ENCODE measurements at regions of chr3 and their contacts with region 1.

Region 1: GRCh38 chr3:16338999-16339398 is 74.0 kb downstream of the OXNAD1 start:
- DNase-seq: peak in 4 of 14 experiments; percentile 32 to 70 (median 62)
- ATAC-seq: peak; percentile 65
- H3K4me3 ChIP-seq: no peak overlapping the region
- H3K4me3 Mint-ChIP-seq: peak overlapping the region; percentile 70
- H3K27ac ChIP-seq: peak overlapping the region; percentile 47 to 66
- H3K27ac Mint-ChIP-seq: peak overlapping the region; percentile 82
- H3K4me1 ChIP-seq: peaks cover 43% of the 10 kb centered on the region
- H3K4me1 Mint-ChIP-seq: peaks cover 81% of the 10 kb centered on the region
- H3K27me3 ChIP-seq: no peaks in the 10 kb centered on the region
- H3K27me3 Mint-ChIP-seq: no peaks in the 10 kb centered on the region
- CTCF ChIP-seq: no peak

Region 2: GRCh38 chr3:16309558-16309957 is 29.4 kb before region 1 on chr3:
- CTCF ChIA-PET with region 1: no interaction called
- POLR2A ChIA-PET with region 1: interaction called, 13 read pairs
- intact Hi-C with region 1: no loop called
- DNase-seq: peak in 9 of 14 experiments; percentile 32 to 88 (median 52)
- ATAC-seq: peak; percentile 69
- H3K4me3 ChIP-seq: no peak overlapping the region
- H3K4me3 Mint-ChIP-seq: peak overlapping the region; percentile 83
- H3K27ac ChIP-seq: peak overlapping the region; percentile 63 to 67
- H3K27ac Mint-ChIP-seq: peak overlapping the region; percentile 94
- H3K4me1 ChIP-seq: peaks cover 78% of the 10 kb centered on the region
- H3K4me1 Mint-ChIP-seq: peaks cover 94% of the 10 kb centered on the region
- H3K27me3 ChIP-seq: no peaks in the 10 kb centered on the region
- H3K27me3 Mint-ChIP-seq: no peaks in the 10 kb centered on the region
- CTCF ChIP-seq: no peak

Region 3: GRCh38 chr3:16370872-16371740 is 32.1 kb after region 1 on chr3:
- CTCF ChIA-PET with region 1: interaction called, 3 read pairs
- POLR2A ChIA-PET with region 1: no interaction called
- intact Hi-C with region 1: loop called in 1 of 2 experiments (anchors 5 kb)
- DNase-seq: peak in 3 of 14 experiments; percentile 20 to 26 (median 21)
- ATAC-seq: peak; percentile 24
- H3K4me3 ChIP-seq: no peak overlapping the region
- H3K4me3 Mint-ChIP-seq: no peak overlapping the region
- H3K27ac ChIP-seq: no peak overlapping the region
- H3K27ac Mint-ChIP-seq: peak overlapping the region; percentile 90
- H3K4me1 ChIP-seq: peaks cover 33% of the 10 kb centered on the region
- H3K4me1 Mint-ChIP-seq: peaks cover 77% of the 10 kb centered on the region
- H3K27me3 ChIP-seq: no peaks in the 10 kb centered on the region
- H3K27me3 Mint-ChIP-seq: no peaks in the 10 kb centered on the region
- CTCF ChIP-seq: no peak

Region 4: GRCh38 chr3:16441371-16441875 is 102.4 kb after region 1 on chr3:
- CTCF ChIA-PET with region 1: no interaction called
- POLR2A ChIA-PET with region 1: no interaction called
- intact Hi-C with region 1: no loop called
- DNase-seq: no peak
- ATAC-seq: no peak
- H3K4me3 ChIP-seq: no peak overlapping the region
- H3K4me3 Mint-ChIP-seq: no peak overlapping the region
- H3K27ac ChIP-seq: no peak overlapping the region
- H3K27ac Mint-ChIP-seq: no peak overlapping the region
- H3K4me1 ChIP-seq: no peaks in the 10 kb centered on the region
- H3K4me1 Mint-ChIP-seq: peaks cover 39% of the 10 kb centered on the region
- H3K27me3 ChIP-seq: no peaks in the 10 kb centered on the region
- H3K27me3 Mint-ChIP-seq: no peaks in the 10 kb centered on the region
- CTCF ChIP-seq: no peak